H1 (cell line): ENCODE measurements at regions of chr12 and their contacts with region 1.

Region 1: GRCh38 chr12:24991209-24992049 is 42.5 kb upstream of the BCAT1 start:
- DNase-seq: no peak
- H3K4me3 ChIP-seq: no peak overlapping the region
- H3K27ac ChIP-seq: no peak overlapping the region
- H3K4me1 ChIP-seq: no peaks in the 10 kb centered on the region
- H3K27me3 ChIP-seq: no peaks in the 10 kb centered on the region
- CTCF ChIP-seq: peak in 2 of 3 experiments; percentile 48 to 55; a peak in 2 of 4 replicates
- EP300 ChIP-seq: no peak
- POLR2A ChIP-seq: no peak
- RAD21 ChIP-seq: peak; percentile 82 to 86

Region 2: DNA sequence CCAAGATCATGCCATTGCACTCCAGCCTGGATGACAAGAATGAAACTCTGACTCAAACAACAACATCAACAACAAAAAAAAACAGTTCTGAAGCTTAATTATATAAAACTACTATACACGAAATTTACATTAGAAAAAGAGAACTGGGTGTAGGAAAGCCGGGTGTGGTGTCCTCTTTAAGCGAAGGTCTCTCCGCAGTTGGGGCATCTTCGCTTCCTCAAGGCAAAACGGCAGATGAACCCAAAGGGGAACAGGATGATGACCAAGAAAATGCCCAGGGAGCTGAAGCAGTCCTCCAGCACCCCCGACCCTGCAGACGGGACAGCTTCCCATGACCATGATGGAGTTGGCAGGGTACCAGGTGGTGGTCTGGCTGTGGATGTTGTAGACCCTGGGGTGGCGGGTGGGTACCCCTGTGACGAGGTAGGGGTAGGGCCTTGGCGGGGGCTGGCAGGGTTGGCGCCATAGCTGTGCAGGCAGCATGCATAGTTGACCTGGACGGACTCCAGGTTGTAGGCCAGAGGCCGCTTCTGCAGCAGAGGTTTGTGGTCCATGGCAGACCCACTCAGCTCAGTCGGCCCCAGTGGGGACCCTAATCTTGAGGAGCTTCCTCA is 24.4 kb before region 1 on chr12:
- CTCF ChIA-PET with region 1: interaction called, 10 read pairs
- POLR2A ChIA-PET with region 1: no interaction called
- DNase-seq: no peak
- H3K4me3 ChIP-seq: no peak overlapping the region
- H3K27ac ChIP-seq: no peak overlapping the region
- H3K4me1 ChIP-seq: no peaks in the 10 kb centered on the region; a peak in 1 of 7 replicates
- H3K27me3 ChIP-seq: no peaks in the 10 kb centered on the region
- CTCF ChIP-seq: no peak
- EP300 ChIP-seq: no peak
- POLR2A ChIP-seq: no peak
- RAD21 ChIP-seq: no peak

Region 3: GRCh38 chr12:25020621-25021243 is 29.3 kb after region 1 on chr12:
- CTCF ChIA-PET with region 1: interaction called, 10 read pairs
- POLR2A ChIA-PET with region 1: no interaction called
- DNase-seq: no peak
- H3K4me3 ChIP-seq: no peak overlapping the region
- H3K27ac ChIP-seq: no peak overlapping the region
- H3K4me1 ChIP-seq: no peaks in the 10 kb centered on the region; a peak in 1 of 7 replicates
- H3K27me3 ChIP-seq: no peaks in the 10 kb centered on the region
- CTCF ChIP-seq: no peak
- EP300 ChIP-seq: no peak
- POLR2A ChIP-seq: no peak
- RAD21 ChIP-seq: no peak

Region 4: DNA sequence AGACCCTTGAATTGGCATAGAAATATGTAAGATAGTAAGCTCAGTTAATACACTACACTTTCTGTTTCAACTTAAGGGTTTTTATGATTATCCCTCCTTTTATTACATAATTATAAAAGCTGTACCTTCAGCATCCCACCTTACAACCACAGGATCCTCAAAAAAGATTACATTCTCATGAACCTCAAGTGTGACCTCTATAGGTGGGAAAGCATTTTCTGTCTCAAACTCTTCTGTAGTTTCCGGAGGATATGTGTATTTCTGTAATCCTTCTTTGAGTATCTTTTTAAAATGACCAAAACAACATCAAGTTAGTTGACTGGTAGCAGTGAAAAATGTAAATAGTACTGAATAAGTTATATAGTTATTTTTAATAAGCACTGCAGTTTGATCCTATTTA is 127.6 kb after region 1 on chr12:
- CTCF ChIA-PET with region 1: interaction called, 57 read pairs
- POLR2A ChIA-PET with region 1: no interaction called
- DNase-seq: no peak
- H3K4me3 ChIP-seq: no peak overlapping the region
- H3K27ac ChIP-seq: no peak overlapping the region
- H3K4me1 ChIP-seq: no peaks in the 10 kb centered on the region
- H3K27me3 ChIP-seq: no peaks in the 10 kb centered on the region
- CTCF ChIP-seq: peak in 1 of 3 experiments; percentile 21; a peak in 2 of 4 replicates
- EP300 ChIP-seq: no peak
- POLR2A ChIP-seq: no peak
- RAD21 ChIP-seq: peak; percentile 39 to 43

Region 5: DNA sequence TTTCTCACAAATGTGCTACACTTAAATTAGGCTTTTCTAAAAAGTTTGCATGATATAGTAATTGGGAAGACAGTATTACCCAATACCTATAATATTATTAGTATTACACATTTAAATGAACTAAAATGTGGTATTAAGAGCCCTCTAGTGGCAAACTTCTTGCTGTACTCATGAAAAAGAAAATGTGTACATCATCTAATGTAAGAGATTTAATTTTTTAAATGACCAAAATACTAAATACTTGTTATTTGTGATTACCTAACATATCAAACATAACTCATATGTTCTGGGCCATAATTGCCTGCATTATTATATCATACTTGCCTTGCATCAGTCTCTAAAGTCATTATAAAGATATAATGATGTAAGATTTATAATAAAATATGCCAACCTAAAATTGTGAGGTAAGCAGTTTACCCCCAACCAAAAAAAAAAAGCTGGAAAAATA is 139.3 kb after region 1 on chr12:
- CTCF ChIA-PET with region 1: interaction called, 50 read pairs
- POLR2A ChIA-PET with region 1: no interaction called
- DNase-seq: no peak
- H3K4me3 ChIP-seq: no peak overlapping the region
- H3K27ac ChIP-seq: no peak overlapping the region
- H3K4me1 ChIP-seq: no peaks in the 10 kb centered on the region
- H3K27me3 ChIP-seq: no peaks in the 10 kb centered on the region
- CTCF ChIP-seq: peak in 2 of 3 experiments; percentile 19 to 25; a peak in 2 of 4 replicates
- EP300 ChIP-seq: no peak
- POLR2A ChIP-seq: no peak
- RAD21 ChIP-seq: peak; percentile 50 to 66

Region 6: DNA sequence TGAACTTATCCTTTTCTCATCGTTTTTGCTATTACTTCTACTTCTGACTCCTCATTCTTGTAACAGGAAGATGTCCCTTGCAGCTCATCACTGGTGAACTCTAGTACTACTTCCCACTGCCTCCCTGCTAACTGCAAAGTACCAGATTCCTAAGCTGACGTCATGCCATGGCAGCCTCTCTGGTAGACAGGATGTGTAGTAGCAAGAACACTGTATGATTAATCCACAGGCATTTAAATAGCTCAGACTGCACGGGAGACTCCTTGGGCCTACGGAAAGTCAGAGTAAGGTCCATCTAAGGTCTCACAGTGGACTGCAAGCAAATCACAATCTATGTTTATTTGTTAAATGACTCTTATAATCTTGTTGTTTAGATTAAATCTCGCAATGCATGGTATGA is 160.0 kb after region 1 on chr12:
- CTCF ChIA-PET with region 1: interaction called, 27 read pairs
- POLR2A ChIA-PET with region 1: interaction called, 3 read pairs
- DNase-seq: no peak
- H3K4me3 ChIP-seq: no peak overlapping the region
- H3K27ac ChIP-seq: no peak overlapping the region
- H3K4me1 ChIP-seq: peaks cover 0 to 9% (median 0%) of the 10 kb centered on the region in 4 experiments; a peak in 3 of 7 replicates
- H3K27me3 ChIP-seq: no peaks in the 10 kb centered on the region
- CTCF ChIP-seq: no peak
- EP300 ChIP-seq: no peak
- POLR2A ChIP-seq: no peak
- RAD21 ChIP-seq: no peak